Activated CD4-positive, alpha-beta memory T cell treated with anti-CD3 and anti-CD28 coated beads for 36 hours (primary cell): ENCODE measurements at regions of chr14 and their contacts with region 1.

Region 1: GRCh38 chr14:53055003-53055402 is 98.1 kb downstream of the DDHD1 start:
- DNase-seq: no peak
- H3K4me3 Mint-ChIP-seq: no peak overlapping the region
- H3K27ac Mint-ChIP-seq: no peak overlapping the region
- H3K4me1 Mint-ChIP-seq: peaks cover 4% of the 10 kb centered on the region
- H3K27me3 Mint-ChIP-seq: no peaks in the 10 kb centered on the region

Region 2: GRCh38 chr14:52923902-52924575 is 131.0 kb before region 1 on chr14:
- CTCF ChIA-PET with region 1: interaction called, 4 read pairs
- POLR2A ChIA-PET with region 1: no interaction called
- intact Hi-C with region 1: loop called (anchors 1 kb)
- DNase-seq: peak; percentile 15
- H3K4me3 Mint-ChIP-seq: no peak overlapping the region
- H3K27ac Mint-ChIP-seq: no peak overlapping the region
- H3K4me1 Mint-ChIP-seq: peaks cover 6% of the 10 kb centered on the region
- H3K27me3 Mint-ChIP-seq: peaks cover 2% of the 10 kb centered on the region

Region 3: DNA sequence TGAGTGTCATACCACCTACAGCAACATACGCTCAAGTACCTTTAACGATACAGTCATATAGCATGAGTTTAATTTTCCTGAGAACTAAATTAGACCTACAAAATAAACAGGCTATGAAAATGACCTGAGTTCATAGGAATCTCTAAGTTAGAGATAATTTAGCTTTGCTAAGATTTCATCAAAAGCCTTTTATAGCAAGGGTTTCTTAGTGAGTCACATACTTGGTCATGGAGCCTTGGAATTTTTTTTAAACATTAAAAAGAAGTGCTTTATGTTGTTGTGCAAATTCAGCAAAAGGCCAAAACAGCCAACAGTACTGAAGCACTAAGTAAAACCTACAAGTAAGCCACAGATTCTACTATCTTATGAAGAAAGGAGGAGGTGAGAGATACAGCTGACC is 10.5 kb before region 1 on chr14:
- CTCF ChIA-PET with region 1: interaction called, 13 read pairs
- POLR2A ChIA-PET with region 1: no interaction called
- intact Hi-C with region 1: no loop called
- DNase-seq: no peak
- H3K4me3 Mint-ChIP-seq: no peak overlapping the region
- H3K27ac Mint-ChIP-seq: no peak overlapping the region
- H3K4me1 Mint-ChIP-seq: no peaks in the 10 kb centered on the region
- H3K27me3 Mint-ChIP-seq: no peaks in the 10 kb centered on the region

Region 4: GRCh38 chr14:53295985-53296582 is 241.1 kb after region 1 on chr14:
- CTCF ChIA-PET with region 1: no interaction called
- POLR2A ChIA-PET with region 1: no interaction called
- intact Hi-C with region 1: no loop called
- DNase-seq: no peak
- H3K4me3 Mint-ChIP-seq: no peak overlapping the region
- H3K27ac Mint-ChIP-seq: no peak overlapping the region
- H3K4me1 Mint-ChIP-seq: peaks cover 3% of the 10 kb centered on the region
- H3K27me3 Mint-ChIP-seq: no peaks in the 10 kb centered on the region

Region 5: DNA sequence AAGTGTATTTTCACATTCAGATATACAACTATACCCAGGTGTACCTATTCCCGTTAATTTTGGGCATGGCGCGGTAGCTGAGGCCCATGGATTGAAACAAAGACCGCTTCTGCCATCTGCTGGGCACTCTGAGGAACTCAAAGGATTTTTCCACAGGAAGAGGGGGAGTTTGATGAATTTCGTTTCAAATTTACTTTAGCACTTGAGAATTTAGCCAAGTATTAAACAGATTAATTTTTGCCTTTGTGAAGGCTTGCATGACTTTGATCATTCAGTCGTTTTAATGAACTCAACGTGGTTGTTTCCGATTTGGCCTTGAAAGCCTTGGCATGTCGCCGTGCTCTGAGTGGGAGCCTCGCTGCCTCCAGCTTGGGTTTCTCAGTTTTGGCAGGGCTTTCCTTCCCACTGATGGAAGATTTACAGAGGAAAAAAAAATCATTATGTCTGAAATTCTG is 251.3 kb after region 1 on chr14:
- CTCF ChIA-PET with region 1: interaction called, 13 read pairs
- POLR2A ChIA-PET with region 1: no interaction called
- intact Hi-C with region 1: loop called (anchors 2 kb)
- DNase-seq: peak; percentile 58
- H3K4me3 Mint-ChIP-seq: peak overlapping the region; percentile 55
- H3K27ac Mint-ChIP-seq: peak overlapping the region; percentile 40
- H3K4me1 Mint-ChIP-seq: peaks cover 6% of the 10 kb centered on the region
- H3K27me3 Mint-ChIP-seq: peaks cover 1% of the 10 kb centered on the region